Activated T-helper 1 cell treated with anti-CD3 and anti-CD28 coated beads, Interleukin-12 subunit alpha, Interleukin-12 subunit beta, Interleukin-2, Interleukin-4 antibody, amounts not matched to agents 30 ng/mL and 10 ng/mL and 1 ng/mL, durations not matched to agents 14 hours and 24 hours and 36 hours (primary cell): ENCODE measurements at regions of chr3 and their contacts with region 1.

Region 1: DNA sequence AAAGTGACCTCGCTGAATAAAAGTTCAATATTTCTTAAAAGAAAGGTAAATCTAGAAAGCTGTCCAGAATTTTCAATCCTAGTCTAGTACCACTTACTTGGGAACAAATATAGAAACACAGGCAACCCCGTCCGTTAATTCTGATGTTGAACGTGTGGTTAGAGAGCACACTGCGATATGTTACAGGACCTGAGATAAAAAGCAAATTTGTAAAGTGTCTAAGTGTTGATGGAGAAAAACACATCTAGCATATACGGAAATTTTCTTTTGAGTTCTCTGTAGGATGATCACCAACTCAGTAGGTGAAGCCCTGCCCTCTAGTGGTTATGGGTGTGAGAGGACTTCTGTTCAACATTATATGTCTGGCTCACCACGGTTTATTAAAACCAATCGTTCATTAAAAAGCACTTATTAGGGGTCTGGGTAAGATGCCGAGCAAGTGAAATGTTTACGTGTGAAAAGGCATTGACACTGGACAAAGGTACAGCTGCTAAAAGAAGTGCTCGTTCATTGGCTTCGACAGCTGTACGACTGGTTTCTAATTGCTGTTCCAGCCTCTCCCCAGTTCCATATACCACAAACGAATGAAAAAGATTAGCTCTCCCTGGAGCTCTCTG is 1.0 kb upstream of the ATP2C1 start:
- DNase-seq: peak; percentile 59
- H3K4me3 Mint-ChIP-seq: peak overlapping the region; percentile 92
- H3K27ac Mint-ChIP-seq: peak overlapping the region; percentile 96
- H3K4me1 Mint-ChIP-seq: peaks cover 48% of the 10 kb centered on the region
- H3K27me3 Mint-ChIP-seq: no peaks in the 10 kb centered on the region

Region 2: GRCh38 chr3:129439817-129440617 is 1452.8 kb before region 1 on chr3 and contains the starts of genes IFT122 and MBD4:
- intact Hi-C with region 1: loop called (anchors 5 kb)
- DNase-seq: peak; percentile 100
- H3K4me3 Mint-ChIP-seq: peak within 1 kb of the TSS; percentile 89
- H3K27ac Mint-ChIP-seq: peak within 1 kb of the TSS; percentile 98
- H3K4me1 Mint-ChIP-seq: peaks cover 63% of the 10 kb centered on the region
- H3K27me3 Mint-ChIP-seq: no peaks in the 10 kb centered on the region
- total RNA-seq, gene IFT122: 10.0 and 14.7 TPM in 2 replicates
- total RNA-seq, gene MBD4: 44.1 and 53.3 TPM in 2 replicates

Region 3: DNA sequence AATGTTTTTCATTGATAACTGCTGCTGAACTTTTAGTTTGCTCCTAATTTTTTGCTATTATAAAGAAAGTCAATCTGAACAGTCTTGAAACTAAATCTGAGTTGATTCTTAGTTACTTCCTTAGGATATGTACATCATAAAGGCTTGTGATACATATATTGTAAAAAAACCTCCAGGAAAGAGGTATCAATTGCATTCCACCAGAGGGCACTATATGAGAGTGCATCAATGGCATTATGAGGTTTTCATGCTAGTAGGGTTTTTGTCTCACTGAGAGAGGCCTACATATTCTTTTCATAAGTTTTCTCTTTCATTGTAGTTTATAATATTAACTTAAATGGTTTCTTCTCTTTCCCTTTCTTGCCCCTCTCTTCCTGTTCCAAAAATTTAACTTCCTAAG is 193.1 kb before region 1 on chr3:
- intact Hi-C with region 1: loop called (anchors 1 kb)
- DNase-seq: no peak
- H3K4me3 Mint-ChIP-seq: no peak overlapping the region
- H3K27ac Mint-ChIP-seq: no peak overlapping the region
- H3K4me1 Mint-ChIP-seq: peaks cover 6% of the 10 kb centered on the region
- H3K27me3 Mint-ChIP-seq: no peaks in the 10 kb centered on the region

Region 4: GRCh38 chr3:130850044-130850797 is 42.6 kb before region 1 on chr3:
- intact Hi-C with region 1: loop called (anchors 1 kb)
- DNase-seq: peak; percentile 61
- H3K4me3 Mint-ChIP-seq: peak overlapping the region; percentile 1
- H3K27ac Mint-ChIP-seq: peak overlapping the region; percentile 71
- H3K4me1 Mint-ChIP-seq: peaks cover 41% of the 10 kb centered on the region
- H3K27me3 Mint-ChIP-seq: peaks cover 26% of the 10 kb centered on the region

Region 5: GRCh38 chr3:130948929-130949328 is 56.1 kb after region 1 on chr3:
- intact Hi-C with region 1: loop called (anchors 5 kb)
- DNase-seq: no peak
- H3K4me3 Mint-ChIP-seq: no peak overlapping the region
- H3K27ac Mint-ChIP-seq: peak overlapping the region; percentile 42
- H3K4me1 Mint-ChIP-seq: peaks cover 12% of the 10 kb centered on the region
- H3K27me3 Mint-ChIP-seq: no peaks in the 10 kb centered on the region

Region 6: DNA sequence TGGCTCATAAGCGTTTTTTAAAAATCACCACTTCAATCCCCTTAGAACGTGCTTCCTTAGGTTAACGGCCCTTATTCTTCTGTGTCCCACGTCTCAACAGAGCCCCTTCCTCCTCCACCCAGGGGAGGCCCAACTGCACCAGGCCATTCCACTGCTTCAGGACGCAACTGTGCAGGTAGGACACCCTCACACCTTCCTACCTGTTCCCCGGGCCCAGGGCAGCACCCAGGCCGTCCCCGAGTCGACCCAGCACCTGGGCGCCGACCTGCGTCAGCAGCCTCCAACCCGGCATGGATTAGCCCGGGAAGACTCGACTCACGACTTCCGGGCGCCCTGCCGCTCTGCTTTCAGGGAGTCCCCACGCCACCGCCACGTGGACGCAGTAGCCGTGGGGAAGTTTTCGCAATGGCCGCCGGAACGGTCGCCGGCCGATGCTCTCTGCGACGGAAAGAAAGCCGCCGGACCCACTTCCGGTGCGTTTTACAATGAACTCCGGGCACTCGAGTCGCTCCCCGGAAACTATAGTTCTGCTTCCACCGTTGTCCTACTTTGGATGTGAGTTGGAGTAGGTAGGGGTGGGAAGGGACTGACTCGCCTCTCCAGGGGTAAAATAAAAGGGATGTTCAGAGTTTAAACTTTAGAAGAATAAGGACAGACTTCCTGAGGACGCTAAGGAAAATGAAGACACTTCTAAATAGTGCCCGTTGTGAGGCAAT is 609.8 kb after region 1 on chr3 and contains the start of gene MRPL3:
- intact Hi-C with region 1: loop called (anchors 1 kb)
- DNase-seq: peak; percentile 78
- H3K4me3 Mint-ChIP-seq: peak within 1 kb of the TSS; percentile 100
- H3K27ac Mint-ChIP-seq: peak within 1 kb of the TSS; percentile 95
- H3K4me1 Mint-ChIP-seq: peaks cover 50% of the 10 kb centered on the region
- H3K27me3 Mint-ChIP-seq: peaks cover 4% of the 10 kb centered on the region
- total RNA-seq, gene MRPL3: 166 and 175 TPM in 2 replicates